HEK293T (cell line): ENCODE measurements at regions of chr16 and their contacts with region 1.

Region 1: GRCh38 chr16:56964243-56965148 is 2.7 kb downstream of the CETP start:
- DNase-seq: peak; percentile 90

Region 2: GRCh38 chr16:57045694-57046381 is 81.3 kb after region 1 on chr16:
- CTCF ChIA-PET with region 1: interaction called, 15 read pairs
- POLR2A ChIA-PET with region 1: no interaction called
- DNase-seq: peak; percentile 80

Region 3: DNA sequence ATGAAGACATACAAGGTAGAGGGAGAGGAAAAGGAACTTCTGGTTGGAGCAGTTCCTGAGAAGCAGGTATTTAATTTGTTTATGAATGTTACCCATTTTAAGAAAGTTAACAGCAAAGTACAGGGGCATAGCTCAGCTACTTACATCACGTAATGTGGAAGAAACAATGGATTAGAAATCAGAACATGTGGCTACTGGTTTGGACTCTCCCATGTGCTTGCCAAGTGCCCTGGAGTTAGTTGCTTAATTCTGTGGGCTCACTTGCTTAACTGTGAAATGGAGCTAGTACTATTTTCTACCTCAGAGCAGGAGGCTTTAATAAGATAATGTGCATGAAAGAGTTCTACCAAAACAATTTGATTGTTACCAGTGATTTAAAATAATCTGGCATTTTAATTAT is 249.0 kb after region 1 on chr16:
- CTCF ChIA-PET with region 1: no interaction called
- POLR2A ChIA-PET with region 1: no interaction called
- DNase-seq: no peak

Region 4: DNA sequence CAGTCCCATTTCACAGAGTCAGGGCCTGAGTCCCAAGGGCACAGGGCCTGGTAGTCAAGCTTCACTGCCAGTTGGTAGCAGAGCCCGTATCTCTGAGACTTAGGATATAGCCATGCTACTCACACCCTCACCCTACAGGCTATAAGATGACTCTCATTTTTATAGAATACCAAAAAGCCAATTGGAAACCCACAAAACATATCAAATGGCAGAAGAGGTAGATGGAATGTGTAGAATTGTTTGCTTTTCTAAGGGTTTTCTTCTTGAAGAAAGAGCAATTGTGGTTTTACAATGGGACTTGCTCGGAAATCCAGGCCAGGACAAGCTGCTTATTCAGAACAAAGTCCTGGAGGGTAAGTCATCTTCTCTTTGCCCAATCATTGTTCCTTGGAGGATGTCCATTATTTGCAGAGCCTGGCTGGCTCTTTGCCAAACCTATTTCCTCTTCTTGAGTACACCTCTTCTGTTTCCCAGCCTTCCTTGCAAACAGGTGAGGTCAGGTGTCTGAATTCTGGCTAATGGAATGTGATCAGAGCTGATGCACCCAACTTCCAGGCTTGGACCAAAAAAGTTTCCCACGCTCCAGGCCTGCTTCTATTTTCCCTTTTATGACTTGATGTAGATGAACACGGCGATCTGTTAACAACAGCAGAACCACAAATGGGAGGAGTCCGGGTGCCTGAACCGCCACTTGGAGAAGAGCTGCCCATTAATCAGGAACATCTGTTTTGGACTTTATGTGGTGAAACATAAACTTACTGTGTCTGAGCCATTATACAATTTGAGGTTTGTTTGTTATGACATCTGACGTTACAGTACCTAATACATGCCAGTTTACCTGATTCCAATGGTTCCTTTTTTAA is 377.2 kb after region 1 on chr16:
- CTCF ChIA-PET with region 1: no interaction called
- POLR2A ChIA-PET with region 1: no interaction called
- DNase-seq: no peak

Region 5: DNA sequence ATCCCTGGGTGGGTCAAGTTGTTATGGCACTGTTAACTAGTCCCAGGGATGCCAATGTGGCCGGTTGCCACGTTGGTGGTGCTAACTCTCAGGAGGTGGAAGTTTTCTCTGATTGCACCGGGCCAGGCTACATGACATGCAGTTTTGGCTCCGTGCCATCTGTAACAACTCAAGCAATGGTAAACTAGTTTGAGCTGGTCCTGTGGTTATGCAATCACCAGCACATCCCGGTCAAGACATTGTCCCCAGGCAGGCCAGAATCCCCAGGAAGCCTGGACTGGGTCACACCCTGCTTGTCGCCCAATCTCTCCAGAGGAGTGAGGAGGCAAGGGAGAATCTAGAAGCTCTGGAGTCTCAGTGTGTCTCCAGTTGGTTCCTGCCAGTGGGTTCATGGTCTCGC is 429.9 kb after region 1 on chr16:
- CTCF ChIA-PET with region 1: no interaction called
- POLR2A ChIA-PET with region 1: no interaction called
- DNase-seq: no peak